Posterior cingulate gyrus (tissue), 11 donors: ENCODE measurements at regions of chr5 and their contacts with region 1.

Region 1: DNA sequence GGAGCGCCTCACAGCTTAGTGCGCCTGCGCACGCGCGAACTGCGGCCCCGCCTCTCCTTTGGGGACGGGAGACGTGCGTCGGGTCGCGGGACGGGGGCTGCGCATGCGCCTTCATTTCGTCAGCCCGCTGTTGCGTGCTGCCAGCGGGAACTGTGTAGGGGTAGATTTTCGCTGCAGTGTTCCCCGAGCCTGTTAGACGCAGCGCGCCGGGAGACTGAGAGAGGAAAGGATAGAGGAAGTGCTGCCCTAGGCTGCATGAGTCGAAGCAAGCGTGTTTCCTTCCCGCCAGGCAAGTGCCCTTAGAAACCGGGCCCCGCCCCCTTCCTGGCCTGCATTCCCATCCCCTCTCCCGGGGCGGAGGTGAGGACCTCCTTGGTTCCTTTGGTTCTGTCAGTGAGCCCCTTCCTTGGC is 12.3 kb downstream of the ITGA1 start:
- DNase-seq: peak; percentile 89 to 99 (median 95)

Region 2: DNA sequence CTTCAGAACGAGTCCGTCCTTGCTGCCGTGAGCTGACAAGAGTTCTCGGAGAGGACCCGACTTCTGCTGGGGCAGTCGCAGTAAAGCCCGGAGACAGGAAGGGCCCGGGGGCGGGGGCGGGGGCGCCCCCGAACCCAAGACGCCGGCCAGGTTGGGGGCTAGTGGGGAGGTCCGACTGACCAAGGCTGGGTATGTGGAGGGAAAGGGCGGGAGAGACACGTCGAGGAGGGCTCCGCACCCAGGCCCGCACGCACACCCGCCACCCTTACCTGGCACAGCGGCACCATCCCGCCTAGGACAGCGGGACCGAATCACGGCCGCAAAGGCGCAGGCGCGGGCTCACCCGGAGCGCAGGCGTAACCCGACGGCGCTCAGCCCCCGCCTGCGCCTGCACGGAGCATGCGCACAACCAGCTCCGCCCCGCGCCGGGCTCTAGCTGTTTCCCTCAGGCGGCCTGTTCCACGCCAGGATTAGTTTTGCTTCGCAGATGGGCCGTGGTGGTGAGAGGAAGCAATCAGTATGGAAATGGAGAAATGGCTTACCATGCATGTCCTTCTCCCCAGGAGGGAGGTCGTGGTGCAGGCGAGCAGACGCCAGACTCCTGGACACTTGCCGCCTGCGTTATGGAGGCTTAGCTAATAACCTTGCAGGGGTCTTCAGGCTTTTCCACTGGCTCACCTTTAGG is 309.6 kb after region 1 on chr5 and contains the start of gene MOCS2:
- intact Hi-C with region 1: loop called (anchors 10 kb)
- DNase-seq: peak; percentile 79 to 98 (median 87)